ENCODE measurements at regions of chr9 and their contacts with region 1.

Region 1: GRCh38 chr9:6015278-6016157 is at the start of gene RANBP6:
- DNase-seq: peak; percentile 86
- H3K4me3 Mint-ChIP-seq: peak within 1 kb of the TSS; percentile 96
- H3K27ac Mint-ChIP-seq: peak within 1 kb of the TSS; percentile 97
- H3K4me1 Mint-ChIP-seq: peaks cover 49% of the 10 kb centered on the region
- H3K27me3 Mint-ChIP-seq: no peaks in the 10 kb centered on the region
- total RNA-seq, gene RANBP6: 19.2 and 22.7 TPM in 2 replicates

Region 2: DNA sequence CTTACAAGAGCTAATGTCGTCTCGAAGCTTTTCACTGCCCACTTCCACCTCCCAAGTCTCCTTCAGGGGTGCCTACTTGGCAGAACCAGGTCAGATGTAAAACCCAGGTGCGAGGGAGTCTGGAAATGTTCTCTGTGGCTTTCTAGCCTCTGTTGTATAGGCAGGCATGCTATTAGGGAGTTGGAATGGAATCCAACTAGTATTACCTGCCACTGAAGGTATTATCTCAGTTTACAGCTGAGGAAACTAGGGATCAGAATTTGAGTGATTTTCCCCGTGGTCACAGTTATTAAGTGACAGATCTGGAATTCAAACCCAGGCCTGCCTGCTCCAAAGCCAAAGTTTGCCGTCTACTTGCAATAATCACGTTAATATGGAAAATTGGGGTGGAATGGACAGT is 642.9 kb before region 1 on chr9:
- intact Hi-C with region 1: no loop called
- DNase-seq: no peak
- H3K4me3 Mint-ChIP-seq: no peak overlapping the region
- H3K27ac Mint-ChIP-seq: no peak overlapping the region
- H3K4me1 Mint-ChIP-seq: peaks cover 32% of the 10 kb centered on the region
- H3K27me3 Mint-ChIP-seq: no peaks in the 10 kb centered on the region

Region 3: GRCh38 chr9:5630081-5630507 is 385.4 kb before region 1 on chr9:
- intact Hi-C with region 1: no loop called
- DNase-seq: no peak
- H3K4me3 Mint-ChIP-seq: peak overlapping the region; percentile 99
- H3K27ac Mint-ChIP-seq: peak overlapping the region; percentile 98
- H3K4me1 Mint-ChIP-seq: peaks cover 79% of the 10 kb centered on the region
- H3K27me3 Mint-ChIP-seq: no peaks in the 10 kb centered on the region

Region 4: GRCh38 chr9:5817869-5818268 is 197.6 kb before region 1 on chr9:
- intact Hi-C with region 1: no loop called
- DNase-seq: no peak
- H3K4me3 Mint-ChIP-seq: no peak overlapping the region
- H3K27ac Mint-ChIP-seq: no peak overlapping the region
- H3K4me1 Mint-ChIP-seq: peaks cover 13% of the 10 kb centered on the region
- H3K27me3 Mint-ChIP-seq: no peaks in the 10 kb centered on the region

Region 5: DNA sequence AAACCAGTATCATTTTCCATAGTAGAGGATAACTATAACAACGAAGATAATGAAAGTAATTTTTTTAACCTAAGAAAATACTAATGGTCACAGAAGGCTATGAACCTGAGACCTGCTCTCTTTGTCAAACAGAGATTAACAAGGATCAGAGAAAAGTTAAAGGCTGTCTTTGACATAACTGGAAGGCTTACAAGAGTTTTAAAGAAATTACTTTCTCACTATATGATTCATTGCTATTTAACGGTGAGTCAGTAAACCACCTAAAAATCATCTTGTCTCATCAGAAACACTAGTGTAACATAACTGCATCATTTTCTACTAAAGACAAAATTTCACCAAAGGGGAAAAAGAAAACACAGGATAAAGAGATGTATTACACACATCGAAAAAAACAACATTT is 105.5 kb before region 1 on chr9:
- intact Hi-C with region 1: loop called (anchors 2 kb)
- DNase-seq: no peak
- H3K4me3 Mint-ChIP-seq: no peak overlapping the region
- H3K27ac Mint-ChIP-seq: peak overlapping the region; percentile 84
- H3K4me1 Mint-ChIP-seq: peaks cover 17% of the 10 kb centered on the region
- H3K27me3 Mint-ChIP-seq: no peaks in the 10 kb centered on the region

Region 6: DNA sequence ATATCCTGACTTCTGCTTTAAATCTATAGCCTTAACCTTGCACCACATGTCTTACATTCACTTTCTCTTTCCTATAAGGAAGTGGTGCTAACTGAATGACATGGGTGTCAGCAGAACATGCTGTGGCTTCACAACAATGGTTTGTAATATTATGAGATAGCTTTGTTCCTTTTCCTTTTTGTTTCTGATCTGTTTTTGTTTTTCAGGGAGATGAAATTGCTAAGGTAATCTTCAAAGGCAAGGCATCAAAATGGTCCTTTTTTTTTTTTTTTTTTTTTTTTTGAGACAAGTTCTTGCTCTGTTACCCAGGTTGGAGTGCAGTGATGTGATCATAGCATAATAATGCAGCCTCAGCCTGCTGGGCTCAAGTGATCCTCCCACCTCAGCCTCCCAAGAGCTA is 53.5 kb after region 1 on chr9:
- intact Hi-C with region 1: loop called (anchors 2 kb)
- DNase-seq: peak; percentile 24
- H3K4me3 Mint-ChIP-seq: peak overlapping the region; percentile 61
- H3K27ac Mint-ChIP-seq: peak overlapping the region; percentile 88
- H3K4me1 Mint-ChIP-seq: peaks cover 20% of the 10 kb centered on the region
- H3K27me3 Mint-ChIP-seq: peaks cover 2% of the 10 kb centered on the region

Measured in activated T-helper 1 cell treated with anti-CD3 and anti-CD28 coated beads, Interleukin-12 subunit alpha, Interleukin-12 subunit beta, Interleukin-2, Interleukin-4 antibody, amounts not matched to agents 30 ng/mL and 10 ng/mL and 1 ng/mL, durations not matched to agents 14 hours and 24 hours and 36 hours (primary cell).